Right ventricle myocardium inferior (tissue), 1 donor: ENCODE measurements at regions of chr11 and their contacts with region 1.

Region 1: GRCh38 chr11:47847892-47848635 is at the start of gene NUP160:
- DNase-seq: peak; percentile 96
- ATAC-seq: peak; percentile 91
- total RNA-seq, gene NUP160: 15.3 TPM

Region 2: GRCh38 chr11:47387911-47388678 is 460.0 kb before region 1 on chr11:
- intact Hi-C with region 1: loop called (anchors 10 kb)
- DNase-seq: peak; percentile 65
- ATAC-seq: no peak

Region 3: GRCh38 chr11:47642099-47642855 is 205.8 kb before region 1 on chr11 and contains the start of gene MTCH2:
- intact Hi-C with region 1: loop called (anchors 5 kb)
- DNase-seq: peak; percentile 96
- ATAC-seq: peak; percentile 99
- total RNA-seq, gene MTCH2: 103 TPM

Region 4: GRCh38 chr11:47766305-47767227 is 81.5 kb before region 1 on chr11:
- intact Hi-C with region 1: loop called (anchors 5 kb)
- DNase-seq: peak; percentile 87
- ATAC-seq: peak; percentile 27

Region 5: DNA sequence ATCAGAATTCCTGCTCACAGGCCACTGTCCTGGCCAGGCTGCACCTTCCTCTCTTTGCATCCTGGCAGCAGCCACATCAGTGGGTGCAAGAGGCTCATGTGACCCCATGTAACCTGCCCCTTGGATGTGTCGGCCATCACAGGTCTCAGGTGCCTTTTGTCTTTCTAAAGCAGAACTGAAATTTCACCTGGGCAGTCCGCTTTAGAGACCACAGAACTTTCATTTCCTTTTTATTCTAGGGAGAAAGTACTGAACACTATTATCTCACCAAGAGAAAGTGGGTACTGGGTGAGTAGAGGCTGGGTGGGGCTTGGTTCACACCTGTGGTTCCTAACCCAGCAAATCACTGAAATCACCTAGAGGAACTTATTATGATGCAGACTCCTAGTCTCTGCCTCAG is 51.7 kb after region 1 on chr11:
- intact Hi-C with region 1: no loop called
- DNase-seq: no peak
- ATAC-seq: no peak

Region 6: DNA sequence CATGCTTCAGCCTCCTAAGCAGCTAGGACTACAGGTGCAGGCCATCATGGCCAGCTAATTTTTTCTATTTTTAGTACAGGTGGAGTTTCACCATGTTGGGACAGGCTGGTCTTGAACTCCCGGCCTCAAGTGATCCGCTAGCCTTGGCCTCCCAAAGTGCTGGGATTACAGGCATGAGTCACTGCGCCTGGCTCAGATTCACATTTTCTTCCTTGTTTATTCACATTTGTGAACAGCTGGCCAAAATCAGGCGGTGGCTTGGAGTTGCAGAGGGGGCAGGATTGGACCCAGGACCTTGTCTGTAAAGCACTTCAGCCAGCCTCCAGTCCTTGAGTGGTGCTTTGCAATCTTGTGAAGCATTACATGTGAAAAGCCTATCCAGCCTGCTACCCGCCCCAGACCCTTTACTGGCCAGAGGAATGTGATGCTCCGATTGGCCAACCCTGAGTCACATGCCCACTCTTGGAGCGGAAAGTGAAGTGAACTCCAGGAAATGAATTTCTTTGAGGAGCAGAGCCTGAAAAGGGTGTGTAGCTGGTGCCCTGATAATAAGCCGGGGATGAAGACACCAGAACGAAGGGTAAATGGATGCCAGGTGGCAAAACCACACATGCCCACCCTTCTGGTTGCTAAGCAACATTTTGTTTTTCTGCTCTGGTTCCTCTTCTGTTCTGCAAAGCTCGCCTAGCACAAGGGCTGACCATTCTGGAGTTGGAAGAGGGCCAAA is 69.7 kb after region 1 on chr11:
- intact Hi-C with region 1: no loop called
- DNase-seq: peak; percentile 86
- ATAC-seq: peak; percentile 92

Region 7: GRCh38 chr11:48073031-48073861 is 225.2 kb after region 1 on chr11:
- intact Hi-C with region 1: no loop called
- DNase-seq: no peak
- ATAC-seq: no peak